Tibial artery (tissue), 4 donors: ENCODE measurements at regions of chr1 and their contacts with region 1.

Region 1: DNA sequence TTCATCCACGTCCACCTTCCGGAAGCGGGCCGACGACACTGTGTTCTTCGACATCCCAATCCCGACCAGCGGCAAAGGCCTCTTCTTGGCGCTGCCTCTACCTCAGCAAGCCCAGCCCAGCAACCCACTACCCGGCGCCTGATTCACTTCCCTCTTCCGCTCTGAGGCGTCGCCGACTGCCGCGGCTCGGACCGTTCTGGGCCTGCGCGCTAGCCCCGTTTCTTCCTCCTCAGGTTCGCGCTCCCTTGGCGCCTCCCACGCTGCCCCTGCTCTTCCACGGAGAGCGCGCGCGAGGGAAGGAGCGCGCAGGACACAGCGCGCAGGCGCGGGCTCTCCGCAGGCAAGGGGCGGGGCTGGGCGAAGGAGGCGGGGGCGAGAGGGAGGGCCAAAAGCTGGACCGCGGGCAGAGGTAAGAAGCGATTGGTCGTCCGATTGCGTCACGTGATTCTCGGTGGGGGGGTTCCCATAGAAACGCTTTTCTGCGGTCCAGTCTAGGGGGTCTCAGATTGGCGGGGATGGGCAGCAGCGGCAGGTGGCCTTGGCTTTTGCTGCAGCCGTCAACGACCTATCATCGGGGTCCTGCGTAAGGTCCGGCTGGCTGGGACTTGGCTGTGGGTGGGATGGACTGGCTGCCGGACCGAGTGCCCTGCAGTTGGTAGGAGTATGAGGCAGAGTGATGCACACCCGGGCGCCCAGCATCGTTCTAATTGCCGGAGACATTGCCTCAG is at the start of gene ARPC5:
- DNase-seq: peak; percentile 96 to 99
- H3K4me3 ChIP-seq: peak within 1 kb of the TSS; percentile 83 to 98
- H3K27ac ChIP-seq: peak within 1 kb of the TSS; percentile 91 to 99
- H3K4me1 ChIP-seq: peaks cover 0 to 23% (median 13%) of the 10 kb centered on the region in 4 donors
- H3K27me3 ChIP-seq: no peaks in the 10 kb centered on the region
- CTCF ChIP-seq: peak in 1 of 2 experiments; percentile 6

Region 2: GRCh38 chr1:182029379-182030331 is 1606.1 kb before region 1 on chr1:
- intact Hi-C with region 1: loop called (anchors 5 kb)
- DNase-seq: peak; percentile 96 to 98
- H3K4me3 ChIP-seq: peak overlapping the region; percentile 59 to 68
- H3K27ac ChIP-seq: peak overlapping the region; percentile 81 to 84
- H3K4me1 ChIP-seq: peaks cover 0 to 14% (median 7%) of the 10 kb centered on the region in 4 donors
- H3K27me3 ChIP-seq: no peaks in the 10 kb centered on the region
- CTCF ChIP-seq: peak; percentile 43 to 54

Region 3: GRCh38 chr1:182614796-182615454 is 1020.8 kb before region 1 on chr1:
- intact Hi-C with region 1: loop called (anchors 10 kb)
- DNase-seq: peak; percentile 86 to 94
- H3K4me3 ChIP-seq: peak overlapping the region; percentile 52 to 60
- H3K27ac ChIP-seq: peak overlapping the region; percentile 93 to 95
- H3K4me1 ChIP-seq: peaks cover 7 to 42% (median 36%) of the 10 kb centered on the region in 4 donors
- H3K27me3 ChIP-seq: peaks cover 0 to 10% of the 10 kb centered on the region in 2 donors
- CTCF ChIP-seq: no peak

Region 4: GRCh38 chr1:183139281-183139942 is 496.4 kb before region 1 on chr1:
- intact Hi-C with region 1: no loop called
- DNase-seq: no peak
- H3K4me3 ChIP-seq: no peak overlapping the region
- H3K27ac ChIP-seq: peak overlapping the region in 1 of 2 donors; percentile 27
- H3K4me1 ChIP-seq: peaks cover 0 to 21% (median 3%) of the 10 kb centered on the region in 4 donors
- H3K27me3 ChIP-seq: no peaks in the 10 kb centered on the region
- CTCF ChIP-seq: no peak

Region 5: GRCh38 chr1:183471743-183472487 is 163.9 kb before region 1 on chr1:
- intact Hi-C with region 1: loop called (anchors 5 kb)
- DNase-seq: peak; percentile 97 to 99
- H3K4me3 ChIP-seq: peak overlapping the region; percentile 97 to 99
- H3K27ac ChIP-seq: peak overlapping the region; percentile 90 to 94
- H3K4me1 ChIP-seq: peaks cover 0 to 33% (median 11%) of the 10 kb centered on the region in 4 donors
- H3K27me3 ChIP-seq: no peaks in the 10 kb centered on the region
- CTCF ChIP-seq: peak in 1 of 2 experiments; percentile 1